ENCODE measurements at regions of chr1 and their contacts with region 1.

Region 1: GRCh38 chr1:147670317-147671041 is at the start of gene ACP6:
- DNase-seq: peak; percentile 93
- ATAC-seq: peak; percentile 96
- H3K4me3 Mint-ChIP-seq: peak within 1 kb of the TSS; percentile 85
- H3K27ac Mint-ChIP-seq: peak within 1 kb of the TSS; percentile 86
- H3K4me1 Mint-ChIP-seq: peaks cover 31% of the 10 kb centered on the region
- H3K27me3 Mint-ChIP-seq: peaks cover 19% of the 10 kb centered on the region
- total RNA-seq, gene ACP6: 19.4 to 19.5 TPM

Region 2: DNA sequence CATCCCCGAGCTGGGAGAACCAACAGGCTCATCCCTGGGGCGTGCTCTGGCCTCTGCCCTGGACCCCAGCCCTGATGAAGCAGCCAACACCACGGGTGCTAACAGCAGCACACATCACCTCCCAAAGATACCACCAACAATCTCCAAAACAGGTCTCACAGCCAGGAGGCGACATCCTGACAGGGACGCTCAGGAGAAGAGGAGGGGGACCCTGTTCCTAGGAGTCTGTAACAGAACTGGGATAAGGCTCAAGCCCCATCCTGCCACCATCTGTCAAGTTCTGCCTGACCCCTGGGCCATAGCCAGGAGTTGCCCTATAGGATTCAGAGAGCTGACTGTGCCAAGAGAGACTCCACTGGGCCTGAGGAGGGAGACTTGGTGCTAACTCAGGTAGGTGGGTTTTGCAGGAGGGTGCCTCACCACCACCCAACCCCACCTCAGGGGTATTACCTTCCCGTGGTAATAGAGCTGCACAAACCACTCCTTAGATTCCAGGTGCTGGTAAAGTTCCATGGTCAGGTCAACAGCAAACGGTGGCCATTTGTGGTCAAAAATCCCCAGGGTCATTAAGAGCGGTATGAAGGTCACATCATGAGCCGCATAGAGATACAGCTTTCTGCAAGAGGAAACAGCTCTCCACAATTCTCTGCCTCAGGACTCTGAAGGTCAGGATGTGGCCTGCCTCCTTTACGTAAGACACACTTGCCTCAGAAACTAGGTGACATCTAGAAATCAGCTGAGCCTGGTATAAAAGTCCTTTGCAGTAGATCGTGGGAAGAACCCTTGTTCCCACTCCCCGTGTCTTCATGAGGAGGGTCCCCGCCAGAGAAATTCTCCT is 22.5 kb before region 1 on chr1:
- CTCF ChIA-PET with region 1: interaction called, 9 read pairs
- POLR2A ChIA-PET with region 1: interaction called, 11 read pairs
- DNase-seq: peak; percentile 79
- ATAC-seq: peak; percentile 88
- H3K4me3 Mint-ChIP-seq: peak overlapping the region; percentile 67
- H3K27ac Mint-ChIP-seq: peak overlapping the region; percentile 82
- H3K4me1 Mint-ChIP-seq: peaks cover 75% of the 10 kb centered on the region
- H3K27me3 Mint-ChIP-seq: no peaks in the 10 kb centered on the region

Measured in activated CD8-positive, alpha-beta T cell treated with anti-CD3 and anti-CD28 coated beads, Interleukin-2, amount 10 ng/mL, durations not matched to agents 7 days and 5 days (primary cell).